ENCODE measurements at regions of chr16 and their contacts with region 1.

Region 1: DNA sequence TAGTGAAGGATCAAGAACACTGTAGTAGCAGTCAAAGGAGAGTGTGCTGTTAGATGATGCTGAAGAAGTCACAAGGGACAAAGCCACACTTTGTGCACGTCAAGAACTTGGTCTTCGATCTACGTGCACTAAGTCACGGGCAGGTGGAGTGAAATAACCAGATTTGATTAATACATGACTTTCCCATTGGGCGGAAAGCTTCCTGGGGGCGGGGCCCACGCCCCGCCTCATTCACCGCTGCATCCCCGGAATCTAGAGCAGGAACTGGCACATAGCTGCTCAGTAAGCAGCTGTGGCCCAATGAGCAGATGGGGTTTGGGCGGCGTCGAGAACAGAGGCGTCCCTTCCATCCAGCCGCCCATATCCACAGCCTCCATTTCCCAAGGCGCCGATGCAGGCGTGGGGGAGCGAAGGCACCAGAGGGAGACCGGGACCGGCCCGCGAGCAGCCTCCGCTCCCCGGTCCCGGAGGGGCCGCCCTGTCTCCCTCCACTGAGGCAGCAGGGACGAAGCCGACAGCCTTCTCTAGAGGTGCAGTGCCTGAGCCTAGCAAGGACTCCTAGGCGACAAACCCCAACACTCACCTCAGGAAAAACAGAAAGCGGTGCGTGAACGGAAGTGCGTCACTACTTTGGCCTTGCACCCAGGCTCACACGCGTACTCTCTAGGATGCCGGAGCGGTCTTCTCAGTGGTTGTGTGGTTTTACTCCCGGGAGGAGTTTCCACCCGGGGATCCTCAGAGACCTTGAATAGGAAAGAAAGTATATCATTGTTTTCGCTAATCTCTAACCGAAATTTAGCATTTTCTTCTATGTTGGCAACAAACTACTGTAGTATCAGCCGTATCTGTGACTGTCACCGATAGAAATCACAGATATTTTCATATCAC is 4.9 kb downstream of the ZNF19 start:
- DNase-seq: peak; percentile 98
- H3K4me3 ChIP-seq: peak overlapping the region; percentile 69 to 95 (median 83)
- H3K27ac ChIP-seq: peak overlapping the region; percentile 93 to 98 (median 94)
- H3K4me1 ChIP-seq: peaks cover 6 to 17% (median 16%) of the 10 kb centered on the region in 4 donors
- H3K27me3 ChIP-seq: no peaks in the 10 kb centered on the region
- CTCF ChIP-seq: no peak
- EP300 ChIP-seq: no peak
- POLR2A ChIP-seq: peak; percentile 32

Region 2: DNA sequence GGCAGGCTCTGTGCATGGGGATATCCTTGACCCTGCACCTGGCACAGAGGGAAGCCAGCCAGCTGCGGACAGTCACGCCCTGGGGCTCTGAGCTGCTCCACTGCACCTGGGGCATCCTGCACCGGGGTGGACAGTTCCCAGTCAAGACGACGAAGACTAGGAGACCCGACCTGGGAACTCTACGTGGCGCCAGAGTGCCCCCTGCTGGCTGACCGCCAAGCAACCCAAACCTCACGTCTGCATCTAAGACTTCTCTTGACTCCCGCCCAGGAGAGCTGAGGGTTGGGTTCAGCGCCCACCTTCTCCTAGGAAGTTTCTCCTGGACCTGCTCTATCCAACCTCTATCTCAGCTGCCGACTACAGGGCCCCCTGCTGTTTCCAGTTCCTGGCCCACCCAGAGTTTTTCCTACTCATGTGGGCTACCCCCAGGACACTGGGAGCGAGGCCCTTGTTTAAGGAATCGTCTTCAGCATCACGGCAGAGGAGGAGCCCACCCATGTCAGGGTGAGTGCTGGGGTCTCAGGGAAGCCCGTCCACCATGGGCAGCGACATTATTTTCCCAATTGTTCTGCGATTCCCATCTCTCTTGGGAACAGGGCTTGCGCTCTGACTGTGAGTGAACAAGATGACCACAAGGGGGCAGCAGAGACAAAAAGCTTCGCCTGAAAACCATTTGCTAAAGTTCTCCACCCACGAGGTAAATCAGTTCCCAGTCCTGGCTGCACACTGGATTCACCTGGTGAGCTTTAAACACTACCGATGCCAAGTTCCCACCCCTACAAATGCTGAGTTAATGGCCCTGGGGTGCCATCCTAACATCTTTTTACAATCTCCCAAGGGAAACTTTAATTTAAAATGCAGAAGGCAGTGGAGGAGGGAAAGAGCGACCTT is 71.7 kb before region 1 on chr16:
- intact Hi-C with region 1: no loop called
- DNase-seq: no peak
- H3K4me3 ChIP-seq: no peak overlapping the region
- H3K27ac ChIP-seq: no peak overlapping the region
- H3K4me1 ChIP-seq: peaks cover 0 to 9% (median 3%) of the 10 kb centered on the region in 4 donors
- H3K27me3 ChIP-seq: peaks cover 0 to 55% (median 4%) of the 10 kb centered on the region in 4 donors
- CTCF ChIP-seq: peak; percentile 74 to 89 (median 88)
- EP300 ChIP-seq: no peak
- POLR2A ChIP-seq: no peak

Region 3: GRCh38 chr16:71461686-71462648 is 22.3 kb before region 1 on chr16 and contains the start of gene ZNF23:
- intact Hi-C with region 1: loop called (anchors 1 kb)
- DNase-seq: peak; percentile 95
- H3K4me3 ChIP-seq: peak within 1 kb of the TSS; percentile 75 to 93 (median 80)
- H3K27ac ChIP-seq: peak within 1 kb of the TSS; percentile 80 to 95 (median 90)
- H3K4me1 ChIP-seq: peaks cover 18 to 34% (median 28%) of the 10 kb centered on the region in 4 donors
- H3K27me3 ChIP-seq: no peaks in the 10 kb centered on the region
- CTCF ChIP-seq: peak in 1 of 3 experiments; percentile 35
- EP300 ChIP-seq: no peak
- POLR2A ChIP-seq: peak; percentile 63
- total RNA-seq, gene ZNF23: 9.4 to 12.5 (median 11.2) TPM

Measured in esophagus muscularis mucosa (tissue), 4 donors.